Esophagus squamous epithelium (tissue), 5 donors: ENCODE measurements at regions of chr1 and their contacts with region 1.

Region 1: GRCh38 chr1:118905196-118905595 is 82.9 kb downstream of the TBX15 start:
- DNase-seq: no peak
- H3K4me3 ChIP-seq: no peak overlapping the region
- H3K27ac ChIP-seq: no peak overlapping the region
- H3K4me1 ChIP-seq: no peaks in the 10 kb centered on the region
- H3K27me3 ChIP-seq: peaks cover 0 to 28% (median 0%) of the 10 kb centered on the region in 4 donors
- CTCF ChIP-seq: no peak
- POLR2A ChIP-seq: no peak

Region 2: DNA sequence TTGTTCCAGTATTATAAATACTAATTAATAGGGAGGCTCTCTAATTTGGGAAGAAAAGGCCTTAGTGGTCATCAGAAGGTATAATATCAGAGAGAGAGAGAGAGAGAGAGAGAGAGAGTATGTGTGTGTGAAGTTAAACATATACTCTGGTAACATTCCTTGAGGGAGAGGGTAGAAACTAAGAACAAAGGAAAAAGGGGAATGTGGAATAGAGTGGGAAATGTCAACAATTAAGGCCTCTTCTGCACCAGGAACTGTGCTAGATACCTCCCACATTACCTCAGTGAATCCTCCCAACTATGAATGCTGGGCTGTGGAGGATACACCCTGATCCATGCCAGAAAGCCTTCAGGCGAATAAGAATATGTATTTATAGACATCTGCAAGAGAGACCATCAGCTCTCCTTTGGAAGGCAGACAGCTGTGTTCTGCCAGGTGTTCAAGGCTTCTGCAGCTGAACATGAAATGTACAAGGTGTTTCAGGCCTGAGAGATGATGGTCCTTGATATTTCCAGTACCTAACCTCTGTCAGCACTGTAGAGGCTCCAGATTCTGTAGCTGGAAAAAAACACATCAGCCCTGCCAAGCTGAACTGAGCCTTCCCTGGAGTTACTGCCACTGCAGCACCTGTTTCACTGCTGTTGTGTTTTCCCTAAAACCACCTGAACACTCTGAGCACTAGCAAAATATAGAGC is 53.9 kb after region 1 on chr1:
- intact Hi-C with region 1: loop called (anchors 5 kb)
- DNase-seq: no peak
- H3K4me3 ChIP-seq: no peak overlapping the region
- H3K27ac ChIP-seq: no peak overlapping the region
- H3K4me1 ChIP-seq: no peaks in the 10 kb centered on the region
- H3K27me3 ChIP-seq: peaks cover 0 to 46% (median 0%) of the 10 kb centered on the region in 4 donors
- CTCF ChIP-seq: no peak
- POLR2A ChIP-seq: no peak